Mammary epithelial cell (primary cell): ENCODE measurements at regions of chr9 and their contacts with region 1.

Region 1: DNA sequence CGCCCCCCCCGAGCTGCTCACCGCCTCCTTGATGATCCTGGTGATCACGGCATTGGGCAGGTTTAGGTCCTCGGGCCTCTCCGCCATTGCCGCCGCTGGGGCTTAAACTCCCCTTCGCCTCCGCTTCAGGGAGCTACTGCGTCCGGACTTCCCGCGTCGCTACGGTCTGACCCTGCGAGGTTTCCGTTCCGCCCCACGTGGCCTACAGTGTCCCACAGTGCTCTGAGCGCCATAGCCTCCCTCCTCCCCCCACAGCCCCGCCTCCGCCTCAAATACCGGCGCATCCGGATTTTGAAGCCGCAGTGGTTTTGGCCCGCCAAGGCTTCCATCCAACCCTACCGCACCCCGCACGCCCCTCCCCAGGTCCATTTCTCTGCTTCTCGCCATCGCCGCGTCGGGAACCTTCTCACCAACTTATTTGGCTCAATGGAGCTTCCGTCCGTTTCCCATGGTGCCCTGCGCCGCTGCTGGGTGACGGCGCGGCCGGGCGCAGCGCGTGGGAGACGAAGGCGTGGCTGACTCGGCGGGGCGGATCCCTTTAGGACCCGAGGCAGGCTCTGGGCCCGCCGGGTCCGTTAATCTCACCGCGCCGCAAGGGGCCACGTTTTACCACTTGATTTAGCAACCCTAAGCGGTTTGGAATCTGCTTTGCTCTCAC is at the starts of genes C9orf43 and POLE3:
- DNase-seq: peak; percentile 96
- H3K4me3 ChIP-seq: peak within 1 kb of the TSS; percentile 89 to 98 (median 97)
- H3K27ac ChIP-seq: peak within 1 kb of the TSS; percentile 96
- H3K4me1 ChIP-seq: peaks cover 13% of the 10 kb centered on the region
- H3K27me3 ChIP-seq: no peaks in the 10 kb centered on the region
- CTCF ChIP-seq: no peak
- total RNA-seq, gene C9orf43: 0.56 to 0.83 TPM
- total RNA-seq, gene POLE3: 42.8 to 50.2 TPM

Region 2: DNA sequence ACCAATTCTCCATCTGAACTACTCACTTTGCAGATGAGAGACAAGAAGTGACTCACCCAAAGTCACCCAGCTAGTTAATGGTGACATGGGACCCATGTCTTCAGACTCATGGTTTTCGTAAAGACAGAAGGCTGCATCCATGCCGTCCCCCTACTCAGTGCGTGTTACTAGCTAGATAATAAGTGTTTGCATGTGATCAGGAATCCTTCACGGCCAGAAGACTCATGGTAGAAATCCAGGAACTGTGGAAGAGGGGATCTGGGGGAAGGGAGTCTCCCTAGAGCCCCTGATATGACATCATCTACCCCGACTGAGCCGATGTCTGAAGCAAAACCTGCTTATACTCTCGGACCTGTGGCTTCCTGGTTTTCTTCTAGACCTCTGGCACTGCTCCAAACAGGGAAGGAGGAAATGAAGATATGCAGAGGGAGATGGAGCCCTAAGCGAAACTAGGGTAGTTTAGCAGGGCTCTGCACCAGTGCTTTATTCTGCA is 110.5 kb before region 1 on chr9:
- CTCF ChIA-PET with region 1: interaction called, 3 read pairs
- dilution Hi-C with region 1: loop called (anchors 5 kb)
- in situ Hi-C with region 1: loop called in 1 of 2 experiments (anchors 5 kb)
- intact Hi-C with region 1: no loop called
- DNase-seq: no peak
- H3K4me3 ChIP-seq: no peak overlapping the region
- H3K27ac ChIP-seq: no peak overlapping the region
- H3K4me1 ChIP-seq: no peaks in the 10 kb centered on the region
- H3K27me3 ChIP-seq: no peaks in the 10 kb centered on the region
- CTCF ChIP-seq: no peak

Region 3: GRCh38 chr9:113309204-113309813 is 101.0 kb before region 1 on chr9:
- CTCF ChIA-PET with region 1: no interaction called
- dilution Hi-C with region 1: loop called (anchors 5 kb)
- in situ Hi-C with region 1: loop called in 1 of 2 experiments (anchors 5 kb)
- intact Hi-C with region 1: loop called (anchors 1 kb)
- DNase-seq: peak; percentile 9
- H3K4me3 ChIP-seq: no peak overlapping the region
- H3K27ac ChIP-seq: no peak overlapping the region
- H3K4me1 ChIP-seq: no peaks in the 10 kb centered on the region
- H3K27me3 ChIP-seq: no peaks in the 10 kb centered on the region
- CTCF ChIP-seq: peak; percentile 75 to 78

Region 4: GRCh38 chr9:113340017-113340699 is 70.2 kb before region 1 on chr9 and contains the start of gene WDR31:
- CTCF ChIA-PET with region 1: no interaction called
- dilution Hi-C with region 1: no loop called
- in situ Hi-C with region 1: no loop called
- intact Hi-C with region 1: no loop called
- DNase-seq: peak; percentile 86
- H3K4me3 ChIP-seq: peak within 1 kb of the TSS; percentile 93 to 99 (median 97)
- H3K27ac ChIP-seq: peak within 1 kb of the TSS; percentile 63
- H3K4me1 ChIP-seq: peaks cover 19% of the 10 kb centered on the region
- H3K27me3 ChIP-seq: no peaks in the 10 kb centered on the region
- CTCF ChIP-seq: no peak
- total RNA-seq, gene WDR31: 2.0 to 2.3 TPM

Region 5: GRCh38 chr9:113446323-113446740 is 36.0 kb after region 1 on chr9:
- CTCF ChIA-PET with region 1: no interaction called
- dilution Hi-C with region 1: no loop called
- in situ Hi-C with region 1: no loop called
- intact Hi-C with region 1: no loop called
- DNase-seq: peak; percentile 24
- H3K4me3 ChIP-seq: no peak overlapping the region
- H3K27ac ChIP-seq: no peak overlapping the region
- H3K4me1 ChIP-seq: no peaks in the 10 kb centered on the region
- H3K27me3 ChIP-seq: no peaks in the 10 kb centered on the region
- CTCF ChIP-seq: peak; percentile 34 to 55